PC-9 (cell line): ENCODE measurements at regions of chr4 and their contacts with region 1.

Region 1: DNA sequence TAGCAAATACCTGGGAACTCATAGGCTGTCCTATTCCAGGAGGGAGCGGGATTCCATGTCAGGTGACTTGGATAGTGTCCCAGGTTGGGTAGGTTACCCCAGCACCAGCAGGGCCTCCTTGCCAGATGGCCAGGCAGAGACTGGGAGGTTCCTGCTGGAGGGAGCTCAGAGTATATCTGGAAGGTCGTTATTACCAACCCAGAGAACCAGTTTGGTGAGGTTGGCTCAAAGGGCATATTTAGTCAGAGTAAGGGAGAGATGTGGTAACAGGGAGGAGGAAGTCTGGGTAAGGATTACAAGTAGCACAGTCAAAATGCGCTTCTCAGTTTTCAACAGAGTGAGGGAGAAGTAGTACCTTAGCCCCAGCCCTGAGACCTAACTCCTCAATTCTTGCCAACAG is 53.3 kb upstream of the LNX1 start:
- DNase-seq: peak; percentile 53 to 84
- H3K4me3 ChIP-seq: no peak overlapping the region
- H3K27ac ChIP-seq: no peak overlapping the region
- H3K4me1 ChIP-seq: peaks cover 6% of the 10 kb centered on the region; the same call in 1 of the 2 replicates
- H3K27me3 ChIP-seq: no peaks in the 10 kb centered on the region
- CTCF ChIP-seq: no peak

Region 2: GRCh38 chr4:53189011-53189410 is 455.6 kb before region 1 on chr4:
- CTCF ChIA-PET with region 1: no interaction called
- POLR2A ChIA-PET with region 1: interaction called, 10 read pairs
- intact Hi-C with region 1: no loop called
- DNase-seq: no peak
- H3K4me3 ChIP-seq: no peak overlapping the region
- H3K27ac ChIP-seq: no peak overlapping the region
- H3K4me1 ChIP-seq: no peaks in the 10 kb centered on the region
- H3K27me3 ChIP-seq: no peaks in the 10 kb centered on the region
- CTCF ChIP-seq: no peak